Breast epithelium (tissue), 4 donors: ENCODE measurements at regions of chr16 and their contacts with region 1.

Region 1: DNA sequence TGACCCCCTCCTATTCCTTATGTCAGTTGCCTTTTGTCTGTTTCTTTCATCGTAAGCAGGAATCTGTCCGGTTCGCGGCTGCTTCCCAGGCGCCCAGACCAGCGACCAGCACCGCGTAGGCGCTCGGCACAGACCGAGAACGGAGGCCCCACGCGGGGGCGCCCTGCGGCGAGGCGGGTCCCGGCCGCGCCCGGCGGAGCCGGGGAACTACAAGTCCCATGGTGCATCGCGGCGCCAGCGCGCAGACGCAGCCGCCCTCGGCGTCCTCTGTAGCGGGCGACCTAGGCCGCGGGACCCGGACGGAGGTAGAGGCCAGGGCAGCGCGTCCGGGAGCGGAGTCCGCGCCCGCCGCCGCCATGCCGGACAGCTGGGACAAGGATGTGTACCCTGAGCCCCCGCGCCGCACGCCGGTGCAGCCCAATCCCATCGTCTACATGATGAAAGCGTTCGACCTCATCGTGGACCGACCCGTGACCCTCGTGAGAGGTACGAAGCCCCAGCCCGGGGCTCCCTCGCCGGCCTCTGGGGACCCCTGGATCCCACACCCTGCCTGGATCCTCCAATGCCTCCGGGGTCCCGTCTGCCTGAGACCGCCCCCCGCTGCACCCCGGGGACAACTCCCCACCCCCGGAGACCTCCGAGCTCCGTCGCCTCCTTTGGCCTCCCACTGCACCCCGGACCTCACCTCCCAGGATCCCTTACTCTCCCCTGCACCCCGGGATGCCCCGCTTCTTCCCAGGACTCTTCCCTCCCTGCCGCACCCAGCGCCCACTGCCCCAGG is at the start of gene NDUFB10:
- DNase-seq: peak; percentile 75 to 90
- H3K4me3 ChIP-seq: peak within 1 kb of the TSS; percentile 68 to 85 (median 79)
- H3K27ac ChIP-seq: peak within 1 kb of the TSS; percentile 75 to 82
- H3K4me1 ChIP-seq: peaks cover 2 to 10% of the 10 kb centered on the region in 2 donors
- H3K27me3 ChIP-seq: no peaks in the 10 kb centered on the region
- CTCF ChIP-seq: peak in 2 of 3 donors; percentile 27 to 40
- POLR2A ChIP-seq: no peak
- total RNA-seq, gene NDUFB10: 114 to 233 (median 144) TPM

Region 2: GRCh38 chr16:1002399-1003161 is 956.9 kb before region 1 on chr16:
- intact Hi-C with region 1: loop called (anchors 5 kb)
- DNase-seq: peak; percentile 62 to 63
- H3K4me3 ChIP-seq: peak overlapping the region in 1 of 3 donors; percentile 30
- H3K27ac ChIP-seq: no peak overlapping the region
- H3K4me1 ChIP-seq: no peaks in the 10 kb centered on the region
- H3K27me3 ChIP-seq: peaks cover 0 to 45% of the 10 kb centered on the region in 2 donors
- CTCF ChIP-seq: no peak
- POLR2A ChIP-seq: no peak

Region 3: DNA sequence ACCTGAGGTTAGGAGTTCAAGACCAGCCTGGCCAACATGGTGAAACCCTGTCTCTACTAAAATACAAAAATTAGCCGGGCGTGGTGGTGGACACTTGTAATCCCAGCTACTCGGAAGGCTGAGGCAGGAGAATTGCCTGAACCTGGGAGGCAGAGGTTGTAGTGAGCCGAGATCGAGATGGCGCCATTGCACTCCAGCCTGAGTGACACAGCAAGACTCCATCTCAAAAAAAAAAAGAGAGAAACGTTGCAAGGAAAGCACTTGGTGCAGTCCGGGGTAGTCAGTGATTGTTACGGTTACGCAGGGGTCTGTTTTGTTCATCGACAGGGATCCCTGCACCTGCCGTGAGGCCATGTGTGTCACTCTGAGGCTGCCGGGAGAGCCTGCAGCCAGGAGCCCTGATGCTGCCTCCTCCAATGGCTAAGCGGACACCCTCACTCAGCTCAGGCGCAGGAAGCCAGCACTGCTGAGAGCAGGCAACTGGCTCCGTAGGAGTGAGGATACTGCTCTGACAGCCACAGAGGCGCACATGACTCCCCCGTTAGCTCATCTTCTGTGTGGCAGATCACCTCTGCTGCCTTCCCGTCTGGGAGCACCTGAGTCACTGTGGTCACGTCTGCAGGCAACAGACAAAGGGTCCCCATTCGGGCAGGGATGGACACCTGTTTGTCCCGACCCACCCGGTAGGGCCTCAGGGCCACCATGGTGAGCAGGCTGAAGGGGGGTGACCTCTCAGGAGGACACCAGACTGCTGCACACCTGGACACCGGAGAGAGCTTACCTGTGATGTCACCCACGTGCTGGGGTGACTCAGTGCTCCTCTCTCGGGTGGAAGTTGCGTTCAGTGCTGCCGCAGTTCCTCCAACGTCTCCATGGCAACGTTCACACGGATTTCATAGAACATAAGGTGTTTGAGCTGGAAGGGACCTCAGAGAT is 183.8 kb after region 1 on chr16:
- intact Hi-C with region 1: loop called (anchors 10 kb)
- DNase-seq: no peak
- H3K4me3 ChIP-seq: no peak overlapping the region
- H3K27ac ChIP-seq: no peak overlapping the region
- H3K4me1 ChIP-seq: no peaks in the 10 kb centered on the region
- H3K27me3 ChIP-seq: no peaks in the 10 kb centered on the region
- CTCF ChIP-seq: no peak
- POLR2A ChIP-seq: no peak